ENCODE measurements at regions of chr9 and their contacts with region 1.

Region 1: DNA sequence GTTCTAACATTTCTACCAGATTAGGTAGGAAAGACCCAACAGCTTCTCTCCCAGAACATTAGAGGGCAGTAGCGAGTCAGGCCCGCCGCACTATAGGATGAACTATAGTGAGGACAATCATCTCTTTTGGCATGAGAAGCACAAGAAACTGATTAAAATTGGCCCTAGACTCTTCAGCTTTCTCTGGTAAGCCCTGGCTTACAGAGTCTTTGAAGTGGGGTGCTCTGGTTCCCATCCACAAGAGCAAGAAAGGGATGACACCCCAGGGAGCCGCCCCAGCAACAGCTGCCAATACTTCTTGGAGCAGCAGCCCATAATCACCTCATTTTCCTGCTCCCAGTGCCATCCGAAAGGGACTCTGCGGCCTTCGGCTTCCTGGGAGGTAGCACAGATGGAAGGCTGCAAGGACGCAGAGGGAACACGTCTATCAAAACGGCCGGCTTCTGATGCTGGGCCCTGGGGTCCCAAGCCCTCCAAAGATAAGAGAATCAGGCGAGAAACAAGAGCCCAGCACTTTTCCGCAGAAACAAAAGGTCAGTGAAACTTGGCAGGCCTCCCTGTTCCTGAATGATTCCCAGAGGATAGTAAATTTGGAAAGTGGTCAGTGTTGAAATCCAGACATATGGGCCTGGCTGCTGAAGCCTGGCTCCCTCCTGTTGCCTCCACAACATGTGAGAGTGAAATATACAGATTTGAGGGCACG is 69.3 kb downstream of the HSD17B3 start:
- DNase-seq: peak; percentile 66
- ATAC-seq: peak; percentile 82
- H3K4me3 Mint-ChIP-seq: no peak overlapping the region
- H3K27ac Mint-ChIP-seq: no peak overlapping the region
- H3K4me1 Mint-ChIP-seq: no peaks in the 10 kb centered on the region
- H3K27me3 Mint-ChIP-seq: peaks cover 46% of the 10 kb centered on the region

Region 2: GRCh38 chr9:96661711-96662110 is 429.0 kb after region 1 on chr9:
- CTCF ChIA-PET with region 1: interaction called, 3 read pairs
- POLR2A ChIA-PET with region 1: no interaction called
- intact Hi-C with region 1: loop called (anchors 2 to 10 kb)
- DNase-seq: no peak
- ATAC-seq: no peak
- H3K4me3 Mint-ChIP-seq: no peak overlapping the region
- H3K27ac Mint-ChIP-seq: no peak overlapping the region
- H3K4me1 Mint-ChIP-seq: no peaks in the 10 kb centered on the region
- H3K27me3 Mint-ChIP-seq: peaks cover 2% of the 10 kb centered on the region